ENCODE measurements at regions of chr6 and their contacts with region 1.

Region 1: DNA sequence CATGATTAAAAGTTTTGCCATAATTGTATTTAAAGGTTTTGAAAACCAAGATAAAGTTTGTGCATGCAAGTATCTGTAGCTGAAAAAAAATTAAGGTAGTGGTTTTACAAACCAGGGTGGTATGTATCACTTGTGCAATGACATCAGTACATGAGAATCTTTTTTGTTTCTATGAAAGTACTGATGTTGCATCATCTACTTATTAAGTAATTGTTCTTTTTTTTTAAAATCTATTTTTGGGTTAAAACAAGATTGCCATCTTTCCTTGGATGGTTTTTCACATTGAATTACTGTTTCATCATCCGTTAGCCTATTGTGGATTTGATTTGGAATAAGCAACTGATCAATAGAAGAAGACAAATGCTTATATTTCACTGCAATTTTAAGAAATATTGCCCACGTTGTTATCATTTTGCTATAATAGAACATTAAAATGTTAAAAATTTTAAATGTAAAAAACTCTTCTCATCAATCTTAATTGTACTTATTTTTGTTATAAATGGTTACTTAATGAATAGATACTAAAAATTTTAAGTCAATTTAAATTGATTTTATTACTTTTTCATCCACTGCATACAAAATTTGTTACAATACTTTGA is 39.8 kb upstream of the TAGAP start:
- DNase-seq: no peak
- ATAC-seq: no peak
- H3K4me3 ChIP-seq: no peak overlapping the region
- H3K27ac ChIP-seq: no peak overlapping the region
- H3K4me1 ChIP-seq: no peaks in the 10 kb centered on the region
- H3K27me3 ChIP-seq: peaks cover 12% of the 10 kb centered on the region
- CTCF ChIP-seq: no peak

Region 2: DNA sequence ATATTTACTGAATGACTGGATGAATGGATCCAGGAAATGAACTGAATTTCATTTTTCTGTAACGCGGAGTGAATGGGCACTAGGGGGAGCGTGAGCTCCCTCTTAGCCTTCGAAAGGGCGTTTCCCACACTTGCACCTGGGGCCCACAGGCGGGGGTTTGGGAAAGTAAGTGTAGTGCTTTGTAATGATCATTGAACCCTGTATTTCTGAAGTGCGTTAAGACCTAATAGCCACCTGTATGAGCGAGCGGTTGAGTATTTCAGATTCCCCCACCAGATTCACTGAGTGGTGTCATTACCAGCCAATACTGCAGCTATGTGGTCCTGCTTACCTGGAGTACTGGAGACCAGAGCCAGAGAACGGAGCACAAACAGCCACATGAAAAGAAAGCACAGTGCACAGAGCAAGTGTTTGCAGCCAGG is 424.2 kb before region 1 on chr6:
- CTCF ChIA-PET with region 1: no interaction called
- POLR2A ChIA-PET with region 1: no interaction called
- in situ Hi-C with region 1: no loop called
- intact Hi-C with region 1: loop called (anchors 5 kb)
- DNase-seq: no peak
- ATAC-seq: peak; percentile 79
- H3K4me3 ChIP-seq: no peak overlapping the region
- H3K27ac ChIP-seq: no peak overlapping the region
- H3K4me1 ChIP-seq: no peaks in the 10 kb centered on the region
- H3K27me3 ChIP-seq: no peaks in the 10 kb centered on the region; the same call in 1 of the 2 replicates
- CTCF ChIP-seq: peak; percentile 43

Region 3: GRCh38 chr6:159008656-159009288 is 75.8 kb before region 1 on chr6:
- CTCF ChIA-PET with region 1: no interaction called
- POLR2A ChIA-PET with region 1: interaction called, 21 read pairs
- in situ Hi-C with region 1: no loop called
- intact Hi-C with region 1: no loop called
- DNase-seq: peak; percentile 28
- ATAC-seq: peak; percentile 73
- H3K4me3 ChIP-seq: no peak overlapping the region
- H3K27ac ChIP-seq: no peak overlapping the region
- H3K4me1 ChIP-seq: no peaks in the 10 kb centered on the region
- H3K27me3 ChIP-seq: no peaks in the 10 kb centered on the region
- CTCF ChIP-seq: peak; percentile 69

Region 4: DNA sequence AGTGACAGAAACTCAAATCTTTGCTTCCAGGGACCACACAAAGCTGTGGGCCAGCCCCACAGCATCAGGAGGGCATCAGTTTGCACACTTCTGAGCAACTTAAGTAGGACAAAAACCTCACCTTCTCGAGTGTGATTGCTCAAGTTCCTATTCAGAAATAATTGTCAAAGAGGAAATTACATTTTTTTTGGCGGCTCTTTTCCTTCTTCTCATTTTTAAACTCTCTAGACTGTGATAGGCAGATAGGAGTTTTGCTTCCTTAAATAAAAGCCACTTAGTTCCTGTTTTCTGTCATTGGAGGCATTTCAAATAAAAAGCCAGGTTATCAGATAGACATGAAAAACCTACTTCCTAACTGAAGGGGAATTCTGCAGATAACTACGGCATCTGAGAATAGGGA is 28.6 kb before region 1 on chr6:
- CTCF ChIA-PET with region 1: no interaction called
- POLR2A ChIA-PET with region 1: interaction called, 18 read pairs
- in situ Hi-C with region 1: no loop called
- intact Hi-C with region 1: no loop called
- DNase-seq: no peak
- ATAC-seq: no peak
- H3K4me3 ChIP-seq: no peak overlapping the region
- H3K27ac ChIP-seq: no peak overlapping the region
- H3K4me1 ChIP-seq: no peaks in the 10 kb centered on the region
- H3K27me3 ChIP-seq: peaks cover 48% of the 10 kb centered on the region
- CTCF ChIP-seq: no peak

Measured in Panc1 (cell line).